Activated B cell treated with CpG ODN at 0.5 μM for 24 hours (primary cell): ENCODE measurements at regions of chr17 and their contacts with region 1.

Region 1: DNA sequence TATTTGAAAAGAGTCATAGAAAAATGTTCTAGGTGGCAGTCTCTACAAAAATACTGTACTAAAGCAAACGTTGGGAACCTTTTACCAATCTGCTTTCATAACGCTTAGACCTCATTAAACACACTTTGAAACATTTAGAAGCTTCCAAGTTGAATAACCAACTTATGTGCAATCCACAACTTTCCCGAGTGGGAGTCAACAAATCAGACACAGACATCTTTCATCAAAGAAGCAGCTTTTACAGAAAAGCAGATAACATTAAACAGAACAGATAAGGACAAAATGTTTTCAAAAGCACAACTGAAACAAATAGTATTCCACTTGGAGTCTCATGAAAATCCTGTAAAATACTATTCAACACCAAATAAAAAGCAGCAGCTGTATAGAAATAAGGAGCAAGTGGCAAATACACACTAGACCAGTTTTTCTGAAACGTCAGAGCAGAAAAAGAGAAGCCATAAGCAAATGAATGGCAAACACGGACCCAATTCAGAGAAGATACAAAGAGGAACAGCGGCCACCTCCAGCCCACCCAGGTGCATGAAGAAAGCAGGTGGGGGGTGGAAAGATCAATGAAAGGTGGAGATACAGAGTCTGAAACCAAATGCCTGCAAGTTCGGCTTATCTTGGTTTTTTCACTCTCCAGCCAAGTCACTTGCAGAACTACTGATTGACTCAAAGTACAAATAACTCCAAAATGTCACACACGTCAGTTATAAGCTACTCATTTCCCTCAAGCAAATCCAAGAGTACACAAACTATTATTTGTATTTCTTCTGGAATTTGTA is 18.4 kb upstream of the FBF1 start:
- DNase-seq: no peak
- ATAC-seq: no peak
- H3K4me3 Mint-ChIP-seq: no peak overlapping the region
- H3K27ac Mint-ChIP-seq: no peak overlapping the region
- H3K4me1 Mint-ChIP-seq: peaks cover 6% of the 10 kb centered on the region
- H3K27me3 Mint-ChIP-seq: no peaks in the 10 kb centered on the region
- CTCF ChIP-seq: no peak

Region 2: DNA sequence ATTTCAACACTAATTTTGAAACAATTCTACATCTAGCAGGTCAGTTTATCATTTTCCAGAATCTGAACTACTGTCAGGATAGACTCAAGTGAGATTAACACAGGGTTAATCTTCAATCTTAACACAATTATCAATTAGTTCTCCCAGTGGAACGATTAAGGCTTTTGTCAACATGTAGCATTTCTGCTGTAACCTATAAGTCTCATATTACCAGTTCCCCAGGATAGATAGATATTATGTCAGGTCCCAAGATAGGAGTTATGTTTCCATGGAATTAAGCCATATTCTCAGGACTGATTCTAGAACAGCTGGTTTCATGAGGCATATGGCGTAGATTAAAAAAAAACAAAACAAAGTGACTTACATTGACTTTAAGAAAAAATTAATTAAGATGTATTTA is 14.0 kb before region 1 on chr17:
- CTCF ChIA-PET with region 1: no interaction called
- POLR2A ChIA-PET with region 1: no interaction called
- intact Hi-C with region 1: no loop called
- DNase-seq: no peak
- ATAC-seq: no peak
- H3K4me3 Mint-ChIP-seq: no peak overlapping the region
- H3K27ac Mint-ChIP-seq: no peak overlapping the region
- H3K4me1 Mint-ChIP-seq: peaks cover 11% of the 10 kb centered on the region
- H3K27me3 Mint-ChIP-seq: no peaks in the 10 kb centered on the region
- CTCF ChIP-seq: no peak

Region 3: DNA sequence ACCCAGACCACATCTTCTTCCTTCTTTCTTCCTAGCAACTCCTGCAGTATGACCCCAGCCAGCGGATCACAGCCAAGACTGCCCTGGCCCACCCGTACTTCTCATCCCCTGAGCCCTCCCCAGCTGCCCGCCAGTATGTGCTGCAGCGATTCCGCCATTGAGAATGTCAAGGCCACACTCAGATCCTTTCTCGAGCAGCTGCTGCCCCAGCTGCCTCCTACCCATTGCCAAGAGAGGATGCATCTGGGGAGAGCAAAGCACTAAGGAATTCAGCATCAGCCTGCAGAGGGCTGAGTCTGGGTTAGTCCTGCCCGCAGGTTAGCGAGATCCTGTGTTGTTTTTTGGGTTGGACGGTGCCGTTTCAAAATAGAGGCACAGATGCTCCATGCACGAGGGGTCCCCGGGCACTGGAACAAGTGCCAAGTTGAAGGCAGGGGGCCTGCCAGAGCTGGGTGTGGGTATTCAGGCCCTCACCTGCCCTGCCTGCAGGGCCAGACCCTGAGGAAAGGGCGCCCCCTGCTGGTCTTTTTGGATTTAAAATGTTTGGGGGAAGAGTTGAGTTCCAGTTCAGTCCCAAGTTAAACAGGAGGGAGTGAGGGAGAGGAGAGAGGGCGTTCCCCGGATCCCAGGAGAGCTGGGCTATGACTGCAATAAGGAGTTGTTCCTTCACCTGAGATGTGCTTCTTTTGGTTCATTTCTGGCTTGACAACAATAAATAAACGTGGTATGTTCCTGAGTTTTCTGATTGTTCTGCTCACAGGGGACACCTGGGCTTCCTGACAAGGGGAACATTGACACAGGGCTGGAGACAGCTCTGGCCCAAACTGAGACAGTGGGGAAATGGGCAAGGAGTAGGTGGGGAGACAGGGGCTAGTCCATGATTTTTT is 46.3 kb after region 1 on chr17:
- CTCF ChIA-PET with region 1: no interaction called
- POLR2A ChIA-PET with region 1: interaction called, 11 read pairs
- intact Hi-C with region 1: no loop called
- DNase-seq: peak; percentile 73
- ATAC-seq: peak; percentile 85
- H3K4me3 Mint-ChIP-seq: no peak overlapping the region
- H3K27ac Mint-ChIP-seq: peak overlapping the region; percentile 24
- H3K4me1 Mint-ChIP-seq: no peaks in the 10 kb centered on the region
- H3K27me3 Mint-ChIP-seq: no peaks in the 10 kb centered on the region
- CTCF ChIP-seq: no peak